Adrenal gland (tissue), 19 donors: ENCODE measurements at regions of chr6 and their contacts with region 1.

Region 1: DNA sequence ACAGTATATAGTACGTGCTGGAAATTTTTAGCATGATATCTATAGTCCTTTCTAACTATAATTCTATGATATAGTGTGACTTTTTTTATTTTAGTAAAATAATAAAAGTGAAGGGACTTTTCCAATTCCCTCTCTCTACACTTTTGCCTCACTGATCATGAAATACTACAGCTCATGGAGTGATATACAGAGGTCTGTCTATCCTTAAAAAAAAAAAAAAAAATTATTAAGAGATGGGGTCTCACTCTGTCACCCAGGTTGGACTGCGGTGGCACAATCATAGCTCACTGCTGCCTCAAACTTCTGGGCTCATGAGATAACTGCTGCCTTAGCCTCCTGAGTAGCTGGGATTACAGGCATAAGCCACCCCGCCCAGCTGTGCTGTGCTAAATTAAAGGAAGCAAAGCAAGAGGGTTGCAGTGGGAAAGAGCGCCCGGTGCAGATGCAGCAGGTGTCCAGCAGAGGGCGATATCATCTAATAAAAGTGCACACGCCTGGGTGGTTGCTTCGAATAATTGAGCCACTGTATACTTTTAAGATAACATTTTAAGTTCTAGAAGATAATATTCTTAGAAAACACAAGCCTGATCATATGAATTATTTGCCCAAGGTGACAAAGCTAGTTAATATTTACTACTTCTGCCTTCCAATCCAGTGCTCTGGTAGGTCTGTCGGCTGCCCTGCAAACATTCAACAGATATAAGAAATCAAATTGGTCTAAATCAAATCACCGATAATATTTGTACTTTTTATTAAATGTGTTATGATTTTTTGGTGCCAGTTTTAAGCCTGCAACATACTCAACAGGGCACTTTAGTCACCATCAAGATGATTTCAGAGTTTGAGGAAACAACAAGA is 94.9 kb upstream of the NT5E start:
- DNase-seq: peak; percentile 46 to 88 (median 72)
- H3K4me3 ChIP-seq: no peak overlapping the region
- H3K27ac ChIP-seq: no peak overlapping the region
- H3K4me1 ChIP-seq: no peaks in the 10 kb centered on the region
- H3K27me3 ChIP-seq: no peaks in the 10 kb centered on the region
- CTCF ChIP-seq: peak; percentile 84 to 98 (median 91)
- POLR2A ChIP-seq: no peak

Region 2: DNA sequence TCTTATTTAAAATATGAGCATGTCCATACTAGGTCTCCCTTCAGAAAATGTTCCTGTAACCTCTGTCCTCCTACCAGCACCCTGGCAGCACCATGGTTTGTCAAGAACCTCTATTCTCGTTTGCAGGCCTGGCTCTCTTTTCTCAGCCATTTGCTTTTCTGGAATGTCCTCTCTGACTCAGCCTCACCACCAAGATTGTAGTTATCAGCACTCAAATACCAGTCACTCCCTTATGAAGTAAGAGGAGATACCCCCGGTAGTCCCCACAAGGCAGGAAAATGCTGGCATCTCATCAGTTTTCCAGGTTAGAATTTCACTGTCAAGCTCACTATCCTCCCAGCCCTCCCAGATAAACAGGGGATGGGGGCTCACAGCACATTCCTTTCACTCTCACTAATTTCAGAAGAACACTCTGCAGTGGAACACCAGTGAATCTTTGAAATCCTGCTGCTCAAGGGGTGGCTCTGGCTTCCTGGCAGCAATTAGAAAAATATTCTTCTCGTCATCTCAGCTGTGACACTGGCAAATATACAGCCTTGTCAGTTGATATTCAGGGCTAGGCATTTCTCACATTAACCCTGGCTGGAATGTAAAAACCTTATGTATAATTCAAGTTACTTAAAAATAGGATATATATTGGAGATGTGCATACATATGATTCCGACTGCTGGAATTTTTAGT is 719.8 kb before region 1 on chr6:
- intact Hi-C with region 1: no loop called
- DNase-seq: no peak
- H3K4me3 ChIP-seq: no peak overlapping the region
- H3K27ac ChIP-seq: no peak overlapping the region
- H3K4me1 ChIP-seq: no peaks in the 10 kb centered on the region
- H3K27me3 ChIP-seq: no peaks in the 10 kb centered on the region
- CTCF ChIP-seq: no peak
- POLR2A ChIP-seq: no peak

Region 3: GRCh38 chr6:85278466-85279035 is 76.4 kb before region 1 on chr6:
- intact Hi-C with region 1: no loop called
- DNase-seq: no peak
- H3K4me3 ChIP-seq: no peak overlapping the region
- H3K27ac ChIP-seq: no peak overlapping the region
- H3K4me1 ChIP-seq: no peaks in the 10 kb centered on the region
- H3K27me3 ChIP-seq: no peaks in the 10 kb centered on the region
- CTCF ChIP-seq: no peak
- POLR2A ChIP-seq: no peak

Region 4: DNA sequence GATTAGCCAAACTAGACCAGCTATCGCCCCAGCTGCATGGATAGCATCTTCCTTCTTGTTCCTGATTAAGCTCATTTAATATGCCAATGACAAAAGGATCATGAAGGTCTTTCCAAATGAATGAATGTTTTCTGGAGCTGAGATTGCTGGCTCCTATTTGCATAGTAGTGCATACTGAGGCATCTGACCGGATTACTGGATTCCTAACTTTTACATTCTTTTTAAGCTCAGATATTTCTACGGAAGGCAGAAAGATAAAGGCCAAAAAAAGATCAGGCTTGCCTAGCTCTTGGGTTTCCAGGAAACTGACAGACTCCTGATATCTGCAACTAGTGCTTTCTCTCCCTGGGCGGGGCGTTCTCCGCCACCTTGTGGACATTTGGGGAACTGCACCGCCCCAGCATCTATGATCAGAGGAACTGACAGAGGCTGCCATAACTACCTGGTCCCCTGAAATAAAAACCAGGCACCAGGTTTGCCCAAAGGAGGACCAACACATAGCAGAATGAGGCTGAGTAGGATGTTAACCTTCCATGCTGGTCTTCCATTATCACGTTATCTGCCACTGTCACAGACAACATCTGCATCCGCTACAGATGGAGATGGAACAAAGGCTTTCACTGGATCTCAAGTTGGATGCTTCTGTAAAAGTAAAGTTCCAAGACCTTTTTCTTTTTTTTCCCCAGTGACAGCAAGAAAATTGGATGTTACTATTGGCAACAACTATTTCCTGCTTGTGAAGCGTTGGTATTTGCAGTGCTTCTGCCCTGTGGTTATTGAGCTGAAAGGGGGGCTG is 128.1 kb after region 1 on chr6:
- intact Hi-C with region 1: loop called (anchors 2 to 5 kb)
- DNase-seq: peak; percentile 66 to 93 (median 82)
- H3K4me3 ChIP-seq: no peak overlapping the region
- H3K27ac ChIP-seq: peak overlapping the region in 1 of 5 donors; percentile 16
- H3K4me1 ChIP-seq: no peaks in the 10 kb centered on the region
- H3K27me3 ChIP-seq: no peaks in the 10 kb centered on the region
- CTCF ChIP-seq: peak; percentile 95 to 100 (median 96)
- POLR2A ChIP-seq: no peak